ENCODE measurements at regions of chr21 and their contacts with region 1.

Region 1: DNA sequence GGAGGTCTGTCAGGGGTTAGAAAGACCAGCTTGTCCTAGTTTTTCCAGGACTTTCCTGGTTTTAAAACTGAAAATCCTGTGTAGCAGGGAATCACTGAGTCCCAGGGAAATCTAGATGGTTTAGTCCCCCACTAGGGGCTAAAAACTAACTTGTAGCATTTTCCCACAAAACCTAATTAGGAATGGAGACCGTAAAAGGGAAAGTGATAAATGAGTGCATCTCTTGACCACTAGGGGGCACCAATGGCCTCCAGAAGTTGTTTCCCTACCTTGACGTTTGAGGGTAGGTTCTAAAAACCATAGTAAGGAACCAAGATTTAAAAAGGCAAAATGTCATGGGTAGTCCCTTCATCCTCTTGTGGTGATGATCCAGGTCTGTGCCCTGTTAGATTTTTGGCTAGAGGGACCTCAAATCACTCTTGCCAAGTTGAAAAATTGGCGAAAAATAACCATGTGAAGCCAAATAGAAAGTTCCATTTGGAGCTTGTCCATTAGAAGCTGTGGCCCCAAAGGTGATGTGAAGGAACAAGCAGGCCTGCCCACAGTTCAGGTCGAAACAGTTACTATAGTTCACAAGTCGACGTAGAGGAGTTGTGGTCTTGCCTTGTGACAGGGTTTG is 24.5 kb downstream of the CLIC6 start:
- DNase-seq: peak in 8 of 9 experiments; percentile 15 to 75 (median 46)
- ATAC-seq: no peak
- H3K4me3 ChIP-seq: no peak overlapping the region
- H3K4me3 Mint-ChIP-seq: no peak overlapping the region
- H3K27ac ChIP-seq: no peak overlapping the region
- H3K27ac Mint-ChIP-seq: no peak overlapping the region
- H3K4me1 ChIP-seq: no peaks in the 10 kb centered on the region
- H3K4me1 Mint-ChIP-seq: no peaks in the 10 kb centered on the region
- H3K27me3 ChIP-seq: no peaks in the 10 kb centered on the region
- H3K27me3 Mint-ChIP-seq: peaks cover 15% of the 10 kb centered on the region
- CTCF ChIP-seq: peak; percentile 79

Region 2: DNA sequence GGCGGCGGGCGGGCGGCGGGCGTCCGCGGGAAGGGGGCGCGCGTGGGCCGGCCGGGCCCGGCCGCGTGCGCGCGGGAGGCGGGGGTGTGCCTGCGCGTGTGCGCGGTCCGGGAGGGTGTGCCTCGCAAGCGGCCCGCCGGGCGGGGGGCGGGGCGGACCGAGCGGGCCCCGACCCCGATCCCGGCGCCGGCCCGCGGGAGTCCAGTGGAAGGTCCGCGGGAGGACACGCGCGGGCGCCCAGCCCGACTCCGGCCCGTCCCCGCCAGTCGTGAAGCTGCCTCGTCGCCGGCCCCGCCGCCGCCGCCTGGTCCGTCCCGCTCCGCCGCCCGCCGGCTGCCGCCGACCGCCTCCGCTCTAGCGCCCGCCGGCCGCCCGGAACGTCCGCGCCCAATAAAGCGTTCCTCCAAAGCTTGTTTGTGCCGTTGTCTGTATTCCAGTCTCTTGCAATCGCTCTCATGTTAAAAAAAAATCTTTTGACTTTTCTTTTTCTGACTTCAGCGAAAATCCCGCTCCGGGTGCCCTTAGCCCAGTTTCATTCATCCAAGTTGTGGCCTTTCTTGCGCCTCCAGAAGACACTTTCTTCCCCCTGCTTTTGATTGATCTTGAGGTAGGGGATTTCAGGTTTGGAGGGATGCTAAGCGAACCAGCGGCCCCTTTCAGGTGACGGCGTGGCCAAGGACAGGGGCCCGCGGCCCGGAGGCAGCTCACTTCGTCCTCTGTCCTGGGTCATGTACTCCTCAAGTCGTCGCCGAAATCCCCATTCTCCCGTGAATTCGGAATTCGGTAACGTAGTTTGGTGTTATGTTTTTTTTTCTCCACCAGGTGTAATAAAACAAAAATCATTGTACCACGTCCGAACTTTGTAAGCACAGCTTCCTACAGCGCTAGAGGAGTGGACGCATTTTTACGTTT is 619.2 kb before region 1 on chr21:
- CTCF ChIA-PET with region 1: no interaction called
- POLR2A ChIA-PET with region 1: no interaction called
- intact Hi-C with region 1: no loop called
- DNase-seq: peak in 8 of 9 experiments; percentile 8 to 82 (median 52)
- ATAC-seq: peak; percentile 53
- H3K4me3 ChIP-seq: peak overlapping the region; percentile 70 to 84
- H3K4me3 Mint-ChIP-seq: peak overlapping the region; percentile 94
- H3K27ac ChIP-seq: peak overlapping the region in 1 of 2 experiments; percentile 72
- H3K27ac Mint-ChIP-seq: peak overlapping the region; percentile 94
- H3K4me1 ChIP-seq: peaks cover 48% of the 10 kb centered on the region
- H3K4me1 Mint-ChIP-seq: peaks cover 56% of the 10 kb centered on the region
- H3K27me3 ChIP-seq: no peaks in the 10 kb centered on the region
- H3K27me3 Mint-ChIP-seq: no peaks in the 10 kb centered on the region
- CTCF ChIP-seq: no peak

Region 3: DNA sequence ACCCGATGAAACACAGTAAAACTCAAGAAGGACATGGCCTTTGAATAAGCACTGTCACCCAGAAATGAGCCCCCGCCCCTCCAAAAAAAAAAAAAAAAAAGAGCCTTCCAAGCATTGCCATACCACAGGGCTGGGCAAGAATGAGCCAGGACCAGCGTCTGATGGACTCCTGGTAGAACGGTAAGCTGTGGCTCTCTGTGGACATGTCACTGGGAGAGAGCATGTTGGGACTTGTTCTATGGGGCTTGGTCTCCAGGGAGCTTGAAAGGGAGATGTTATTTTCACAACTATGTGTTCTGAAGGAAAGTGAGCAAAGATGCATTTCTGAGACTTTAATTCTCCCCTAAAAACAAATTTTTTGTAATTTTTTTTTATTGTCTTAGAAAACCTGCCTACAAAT is 18.1 kb before region 1 on chr21:
- CTCF ChIA-PET with region 1: interaction called, 13 read pairs
- POLR2A ChIA-PET with region 1: no interaction called
- intact Hi-C with region 1: no loop called
- DNase-seq: no peak
- ATAC-seq: no peak
- H3K4me3 ChIP-seq: no peak overlapping the region
- H3K4me3 Mint-ChIP-seq: no peak overlapping the region
- H3K27ac ChIP-seq: no peak overlapping the region
- H3K27ac Mint-ChIP-seq: no peak overlapping the region
- H3K4me1 ChIP-seq: peaks cover 15% of the 10 kb centered on the region
- H3K4me1 Mint-ChIP-seq: peaks cover 7% of the 10 kb centered on the region
- H3K27me3 ChIP-seq: peaks cover 2 to 11% of the 10 kb centered on the region in 2 experiments
- H3K27me3 Mint-ChIP-seq: peaks cover 50% of the 10 kb centered on the region
- CTCF ChIP-seq: no peak

Region 4: GRCh38 chr21:34707876-34708325 is 14.6 kb after region 1 on chr21:
- CTCF ChIA-PET with region 1: interaction called, 21 read pairs
- POLR2A ChIA-PET with region 1: no interaction called
- intact Hi-C with region 1: no loop called
- DNase-seq: peak in 8 of 9 experiments; percentile 7 to 60 (median 19)
- ATAC-seq: peak; percentile 65
- H3K4me3 ChIP-seq: peak overlapping the region in 1 of 2 experiments; percentile 19
- H3K4me3 Mint-ChIP-seq: peak overlapping the region; percentile 54
- H3K27ac ChIP-seq: no peak overlapping the region
- H3K27ac Mint-ChIP-seq: peak overlapping the region; percentile 71
- H3K4me1 ChIP-seq: peaks cover 21% of the 10 kb centered on the region
- H3K4me1 Mint-ChIP-seq: peaks cover 26% of the 10 kb centered on the region
- H3K27me3 ChIP-seq: no peaks in the 10 kb centered on the region
- H3K27me3 Mint-ChIP-seq: peaks cover 2% of the 10 kb centered on the region
- CTCF ChIP-seq: no peak

Region 5: DNA sequence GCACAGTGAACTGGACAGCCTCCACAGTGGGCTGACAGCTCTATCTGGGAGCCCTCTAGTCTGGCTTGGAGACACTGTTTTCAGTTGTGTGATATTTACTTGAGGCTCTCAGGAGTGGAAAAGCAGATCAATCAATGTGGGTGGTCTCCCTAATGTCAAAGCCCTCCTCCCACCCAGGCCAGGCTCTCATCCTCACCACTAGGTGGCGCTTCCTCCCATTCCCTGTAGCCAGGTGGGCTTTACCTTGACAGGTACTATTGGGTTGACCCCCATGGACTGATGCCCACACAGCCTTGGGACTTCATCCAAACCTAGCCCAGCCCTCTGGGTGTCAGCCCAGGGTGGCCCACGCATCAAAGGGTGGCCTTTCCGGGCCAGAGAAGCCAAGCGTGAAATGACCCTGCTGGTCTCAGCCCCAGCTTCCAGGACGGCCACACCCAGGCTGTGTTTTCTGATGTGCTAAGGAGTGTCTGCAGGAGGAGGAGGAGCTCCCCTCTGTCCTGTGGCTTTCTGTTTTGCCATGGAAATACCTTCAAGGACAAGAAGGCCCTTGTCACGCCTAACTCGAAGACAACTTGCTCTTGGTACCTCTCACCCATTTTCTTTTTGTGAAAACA is 29.5 kb after region 1 on chr21:
- CTCF ChIA-PET with region 1: interaction called, 12 read pairs
- POLR2A ChIA-PET with region 1: no interaction called
- intact Hi-C with region 1: no loop called
- DNase-seq: peak in 7 of 9 experiments; percentile 9 to 60 (median 39)
- ATAC-seq: no peak
- H3K4me3 ChIP-seq: no peak overlapping the region
- H3K4me3 Mint-ChIP-seq: no peak overlapping the region
- H3K27ac ChIP-seq: no peak overlapping the region
- H3K27ac Mint-ChIP-seq: no peak overlapping the region
- H3K4me1 ChIP-seq: no peaks in the 10 kb centered on the region
- H3K4me1 Mint-ChIP-seq: no peaks in the 10 kb centered on the region
- H3K27me3 ChIP-seq: peaks cover 0 to 2% of the 10 kb centered on the region in 2 experiments
- H3K27me3 Mint-ChIP-seq: peaks cover 16% of the 10 kb centered on the region
- CTCF ChIP-seq: peak; percentile 81

Region 6: DNA sequence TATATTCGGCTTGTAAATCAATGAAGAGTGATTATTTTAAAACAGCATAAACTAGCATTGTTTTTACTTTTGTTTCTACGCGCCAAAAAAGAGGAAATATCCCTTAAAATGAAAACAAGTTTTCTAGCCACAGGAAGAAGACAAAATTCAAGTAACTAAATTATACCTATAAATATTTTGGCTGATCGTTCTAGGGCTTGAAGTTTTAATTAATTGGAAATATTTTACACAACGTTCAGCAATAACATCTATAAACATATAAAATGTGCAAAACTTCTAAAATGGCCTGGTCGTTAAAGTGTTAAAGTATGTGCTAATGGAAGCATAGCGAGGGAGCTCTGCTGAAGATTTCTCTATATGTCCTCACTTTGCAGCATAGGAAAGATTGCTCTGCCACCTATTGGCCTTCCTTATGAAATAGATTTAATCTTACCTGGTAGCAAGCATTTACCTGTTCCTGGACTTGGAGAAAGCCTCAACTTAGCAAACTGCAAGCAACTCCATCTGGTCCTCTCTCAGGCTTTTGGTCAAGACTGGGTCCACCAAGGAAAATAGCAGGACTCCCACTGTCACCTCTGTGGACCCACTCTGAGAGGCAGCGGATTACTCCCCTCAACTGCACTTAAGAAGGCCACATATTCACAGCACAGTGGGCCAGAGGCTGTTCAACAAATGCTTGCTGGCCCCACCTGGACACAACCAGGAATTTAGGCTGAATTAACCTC is 707.1 kb after region 1 on chr21:
- CTCF ChIA-PET with region 1: interaction called, 24 read pairs
- POLR2A ChIA-PET with region 1: no interaction called
- intact Hi-C with region 1: loop called in 1 of 2 experiments (anchors 2 kb)
- DNase-seq: peak in 8 of 9 experiments; percentile 2 to 81 (median 34)
- ATAC-seq: peak; percentile 89
- H3K4me3 ChIP-seq: no peak overlapping the region
- H3K4me3 Mint-ChIP-seq: no peak overlapping the region
- H3K27ac ChIP-seq: no peak overlapping the region
- H3K27ac Mint-ChIP-seq: no peak overlapping the region
- H3K4me1 ChIP-seq: no peaks in the 10 kb centered on the region
- H3K4me1 Mint-ChIP-seq: no peaks in the 10 kb centered on the region
- H3K27me3 ChIP-seq: no peaks in the 10 kb centered on the region
- H3K27me3 Mint-ChIP-seq: no peaks in the 10 kb centered on the region
- CTCF ChIP-seq: peak; percentile 67

Region 7: GRCh38 chr21:36028127-36029069 is 1335.1 kb after region 1 on chr21:
- CTCF ChIA-PET with region 1: interaction called, 25 read pairs
- POLR2A ChIA-PET with region 1: no interaction called
- intact Hi-C with region 1: loop called in 1 of 2 experiments (anchors 1 kb)
- DNase-seq: peak; percentile 23 to 82 (median 66)
- ATAC-seq: peak; percentile 84
- H3K4me3 ChIP-seq: no peak overlapping the region
- H3K4me3 Mint-ChIP-seq: no peak overlapping the region
- H3K27ac ChIP-seq: no peak overlapping the region
- H3K27ac Mint-ChIP-seq: no peak overlapping the region
- H3K4me1 ChIP-seq: peaks cover 4% of the 10 kb centered on the region
- H3K4me1 Mint-ChIP-seq: peaks cover 2% of the 10 kb centered on the region
- H3K27me3 ChIP-seq: no peaks in the 10 kb centered on the region
- H3K27me3 Mint-ChIP-seq: no peaks in the 10 kb centered on the region
- CTCF ChIP-seq: peak; percentile 97